Colonic mucosa (tissue), 4 donors: ENCODE measurements at regions of chr20 and their contacts with region 1.

Region 1: GRCh38 chr20:50744143-50744792 is 12.9 kb downstream of the PARD6B start:
- DNase-seq: peak; percentile 69
- H3K4me3 ChIP-seq: no peak overlapping the region
- H3K27ac ChIP-seq: peak overlapping the region; percentile 63
- H3K4me1 ChIP-seq: peaks cover 7% of the 10 kb centered on the region
- H3K27me3 ChIP-seq: no peaks in the 10 kb centered on the region
- CTCF ChIP-seq: no peak

Region 2: DNA sequence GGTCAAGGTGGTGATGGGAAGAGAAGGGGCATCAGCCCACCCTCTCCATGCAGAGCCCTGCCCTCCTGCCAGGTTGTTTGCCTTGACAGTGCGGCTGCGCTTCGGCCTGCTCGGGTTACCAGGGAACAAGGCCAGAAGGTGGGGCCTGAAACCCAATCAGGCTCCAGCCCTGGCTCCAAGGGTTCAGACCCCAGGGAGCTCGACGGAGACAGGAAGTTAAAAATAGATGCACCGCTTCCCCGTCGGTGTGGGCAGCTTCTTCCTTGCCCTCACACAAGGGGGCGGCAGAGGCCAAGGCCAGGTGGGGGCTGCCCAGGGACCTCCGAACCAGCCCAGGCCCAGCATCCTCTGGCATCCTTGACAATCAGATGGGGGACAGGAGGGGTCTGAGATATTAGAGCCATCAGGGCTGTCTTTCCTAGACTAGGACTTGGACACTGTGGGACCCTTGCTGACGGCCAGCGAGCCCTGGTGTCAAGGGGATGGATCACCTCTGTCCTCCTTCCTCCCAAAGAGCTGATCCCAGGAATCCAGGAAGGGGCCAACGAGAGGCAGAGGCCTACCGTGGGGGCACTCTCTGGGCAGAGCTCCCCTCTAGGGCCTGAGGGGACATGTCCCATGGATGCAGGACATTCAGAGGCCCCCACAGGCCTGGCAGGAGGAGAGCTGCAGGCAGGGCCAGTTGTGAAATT is 118.1 kb before region 1 on chr20:
- intact Hi-C with region 1: loop called (anchors 10 kb)
- DNase-seq: peak; percentile 36
- H3K4me3 ChIP-seq: no peak overlapping the region
- H3K27ac ChIP-seq: no peak overlapping the region
- H3K4me1 ChIP-seq: no peaks in the 10 kb centered on the region
- H3K27me3 ChIP-seq: no peaks in the 10 kb centered on the region
- CTCF ChIP-seq: peak; percentile 47

Region 3: DNA sequence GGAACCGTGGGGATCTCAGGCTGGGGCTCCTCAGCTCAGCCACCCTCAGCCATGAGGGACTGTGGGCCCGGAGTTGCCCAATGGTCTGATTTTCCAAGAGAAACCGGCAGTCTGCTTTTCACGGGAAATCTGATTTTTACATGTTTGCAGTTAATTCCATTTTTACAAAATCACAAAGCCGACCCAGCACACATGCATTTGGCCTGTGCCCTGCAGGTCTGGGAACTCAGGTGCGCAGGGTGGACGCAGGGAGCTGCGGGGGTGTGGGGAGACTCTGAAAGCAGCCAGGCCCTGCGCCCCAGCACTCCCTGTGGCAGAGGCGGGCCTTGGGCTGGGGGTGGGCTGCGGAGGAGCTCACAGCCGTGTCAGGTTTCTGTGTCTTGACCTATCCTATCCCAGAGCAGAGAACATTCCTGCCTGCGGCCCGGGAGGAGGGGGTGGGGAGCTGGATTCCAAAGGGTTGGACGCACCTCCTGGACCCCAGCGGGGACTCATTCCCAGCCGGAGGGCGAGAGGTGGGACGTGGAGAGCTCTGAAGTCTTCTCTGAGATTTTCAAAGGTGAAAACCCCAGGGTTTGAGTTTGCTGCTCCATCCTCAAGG is 126.4 kb after region 1 on chr20:
- intact Hi-C with region 1: no loop called
- DNase-seq: no peak
- H3K4me3 ChIP-seq: no peak overlapping the region
- H3K27ac ChIP-seq: no peak overlapping the region
- H3K4me1 ChIP-seq: no peaks in the 10 kb centered on the region
- H3K27me3 ChIP-seq: no peaks in the 10 kb centered on the region
- CTCF ChIP-seq: no peak